K562 (cell line): ENCODE measurements at regions of chr5 and their contacts with region 1.

Region 1: DNA sequence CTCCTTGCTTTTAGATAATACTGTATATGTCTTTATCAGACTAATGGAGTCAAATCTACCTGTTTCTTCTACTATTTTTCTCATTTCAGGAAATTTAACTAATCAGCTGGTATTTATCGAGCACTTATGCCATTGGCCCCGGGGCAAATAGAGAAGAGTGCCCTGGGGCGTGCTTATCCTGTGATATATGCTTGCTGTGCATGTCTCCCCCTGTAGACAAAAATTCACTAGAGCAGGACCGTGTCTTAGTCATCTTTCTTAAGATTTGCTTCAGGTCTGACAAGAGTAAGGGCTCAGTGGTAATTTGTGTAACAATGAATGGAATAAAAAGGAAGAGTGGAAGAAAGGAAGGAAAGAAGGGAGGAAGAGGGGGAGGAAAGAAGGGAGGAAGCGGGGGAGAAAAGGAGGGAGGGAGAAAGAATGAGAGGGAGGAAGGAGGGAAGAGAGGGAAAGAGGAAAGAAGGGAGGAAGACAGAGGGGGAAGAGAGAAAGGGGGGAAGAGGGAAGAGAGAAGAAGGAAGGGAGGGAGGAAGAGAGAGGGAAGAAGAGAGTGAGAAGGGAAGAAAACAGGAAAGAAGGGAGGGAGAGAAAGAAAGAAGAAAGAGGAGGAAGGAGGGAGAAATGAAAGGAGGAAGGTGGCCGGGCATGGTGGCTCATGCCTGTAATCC is 295.7 kb upstream of the PANK3 start:
- DNase-seq: peak; percentile 17 to 24 (median 20)
- ATAC-seq: peak; percentile 92
- H3K4me3 ChIP-seq: no peak overlapping the region
- H3K27ac ChIP-seq: no peak overlapping the region
- H3K4me1 ChIP-seq: no peaks in the 10 kb centered on the region
- H3K27me3 ChIP-seq: peaks cover 3 to 24% of the 10 kb centered on the region in 2 experiments; a peak in 4 of 5 replicates
- CTCF ChIP-seq: peak; percentile 40 to 60 (median 43); a peak in 5 of 6 replicates
- EP300 ChIP-seq: no peak
- POLR2A ChIP-seq: no peak
- RAD21 ChIP-seq: peak; percentile 68 to 78

Region 2: GRCh38 chr5:168443950-168444700 is 430.7 kb before region 1 on chr5:
- CTCF ChIA-PET with region 1: no interaction called
- POLR2A ChIA-PET with region 1: no interaction called
- in situ Hi-C with region 1: no loop called
- intact Hi-C with region 1: no loop called
- DNase-seq: no peak
- ATAC-seq: no peak
- H3K4me3 ChIP-seq: no peak overlapping the region
- H3K27ac ChIP-seq: no peak overlapping the region
- H3K4me1 ChIP-seq: no peaks in the 10 kb centered on the region
- H3K27me3 ChIP-seq: peaks cover 15 to 21% of the 10 kb centered on the region in 2 experiments; a peak in 4 of 5 replicates
- CTCF ChIP-seq: no peak
- EP300 ChIP-seq: no peak
- POLR2A ChIP-seq: no peak
- RAD21 ChIP-seq: no peak

Region 3: GRCh38 chr5:168670866-168671575 is 203.8 kb before region 1 on chr5:
- CTCF ChIA-PET with region 1: no interaction called
- POLR2A ChIA-PET with region 1: no interaction called
- in situ Hi-C with region 1: no loop called
- intact Hi-C with region 1: no loop called
- DNase-seq: peak; percentile 22 to 39 (median 28)
- ATAC-seq: peak; percentile 87
- H3K4me3 ChIP-seq: no peak overlapping the region
- H3K27ac ChIP-seq: no peak overlapping the region
- H3K4me1 ChIP-seq: peaks cover 0 to 6% of the 10 kb centered on the region in 2 experiments; a peak in 1 of 5 replicates
- H3K27me3 ChIP-seq: peaks cover 4 to 33% of the 10 kb centered on the region in 2 experiments; a peak in 4 of 5 replicates
- CTCF ChIP-seq: peak in 2 of 3 experiments; percentile 18 to 34; a peak in 2 of 6 replicates
- EP300 ChIP-seq: no peak
- POLR2A ChIP-seq: no peak
- RAD21 ChIP-seq: 0 out of 4 replicates have a peak, but pooled peaks of 1 of the 2 experiments have one; percentile 5

Region 4: DNA sequence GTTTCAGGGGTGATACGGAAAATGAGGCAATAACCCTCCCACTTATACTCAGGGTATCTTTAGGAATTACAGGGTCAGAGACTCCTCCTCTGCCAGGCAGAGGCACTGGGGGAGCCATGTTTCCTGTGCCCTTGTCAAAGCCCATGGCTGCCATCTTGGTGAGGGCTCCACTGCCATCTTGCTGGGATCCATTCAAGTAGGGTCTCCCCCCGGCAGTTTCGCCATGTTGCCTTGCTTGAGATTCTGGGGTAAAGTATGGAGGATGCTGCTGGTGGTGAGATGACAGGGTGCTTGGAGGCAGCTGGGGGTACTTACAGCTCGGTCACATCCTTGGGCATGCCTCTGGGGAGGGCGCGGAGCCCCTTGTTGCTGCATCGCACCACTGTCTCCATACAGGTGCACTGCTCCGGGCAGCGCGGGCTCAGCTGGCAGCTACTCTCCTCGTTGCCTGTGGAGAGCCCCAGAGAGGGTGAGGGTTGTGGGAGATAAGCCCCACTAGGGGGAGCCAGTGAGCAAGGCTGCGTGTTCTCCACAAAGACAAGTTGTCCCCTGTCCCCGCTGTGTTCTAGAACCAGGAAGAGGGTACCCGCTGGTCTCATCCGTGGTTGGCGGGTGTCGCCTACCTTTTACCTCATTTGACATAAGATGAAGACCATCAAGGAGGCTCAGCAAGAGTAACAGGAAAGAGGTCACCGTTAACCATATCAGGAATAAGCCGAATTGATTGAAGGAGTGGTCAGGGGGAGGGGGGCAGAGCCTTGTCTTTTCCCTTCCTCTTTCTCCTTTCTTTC is 126.7 kb before region 1 on chr5:
- CTCF ChIA-PET with region 1: no interaction called
- POLR2A ChIA-PET with region 1: no interaction called
- in situ Hi-C with region 1: no loop called
- intact Hi-C with region 1: loop called (anchors 1 kb)
- DNase-seq: peak; percentile 74 to 85 (median 78)
- ATAC-seq: peak; percentile 97
- H3K4me3 ChIP-seq: no peak overlapping the region
- H3K27ac ChIP-seq: no peak overlapping the region
- H3K4me1 ChIP-seq: 0 out of 5 replicates have a peak, but pooled peaks cover 0 to 2% of the 10 kb centered on the region in 2 experiments
- H3K27me3 ChIP-seq: peaks cover 3 to 19% of the 10 kb centered on the region in 2 experiments; a peak in 3 of 5 replicates
- CTCF ChIP-seq: peak; percentile 80 to 86 (median 81)
- EP300 ChIP-seq: no peak
- POLR2A ChIP-seq: no peak
- RAD21 ChIP-seq: peak; percentile 84 to 86